Activated B cell treated with CpG ODN at 0.5 μM for 24 hours (primary cell): ENCODE measurements at regions of chr1 and their contacts with region 1.

Region 1: DNA sequence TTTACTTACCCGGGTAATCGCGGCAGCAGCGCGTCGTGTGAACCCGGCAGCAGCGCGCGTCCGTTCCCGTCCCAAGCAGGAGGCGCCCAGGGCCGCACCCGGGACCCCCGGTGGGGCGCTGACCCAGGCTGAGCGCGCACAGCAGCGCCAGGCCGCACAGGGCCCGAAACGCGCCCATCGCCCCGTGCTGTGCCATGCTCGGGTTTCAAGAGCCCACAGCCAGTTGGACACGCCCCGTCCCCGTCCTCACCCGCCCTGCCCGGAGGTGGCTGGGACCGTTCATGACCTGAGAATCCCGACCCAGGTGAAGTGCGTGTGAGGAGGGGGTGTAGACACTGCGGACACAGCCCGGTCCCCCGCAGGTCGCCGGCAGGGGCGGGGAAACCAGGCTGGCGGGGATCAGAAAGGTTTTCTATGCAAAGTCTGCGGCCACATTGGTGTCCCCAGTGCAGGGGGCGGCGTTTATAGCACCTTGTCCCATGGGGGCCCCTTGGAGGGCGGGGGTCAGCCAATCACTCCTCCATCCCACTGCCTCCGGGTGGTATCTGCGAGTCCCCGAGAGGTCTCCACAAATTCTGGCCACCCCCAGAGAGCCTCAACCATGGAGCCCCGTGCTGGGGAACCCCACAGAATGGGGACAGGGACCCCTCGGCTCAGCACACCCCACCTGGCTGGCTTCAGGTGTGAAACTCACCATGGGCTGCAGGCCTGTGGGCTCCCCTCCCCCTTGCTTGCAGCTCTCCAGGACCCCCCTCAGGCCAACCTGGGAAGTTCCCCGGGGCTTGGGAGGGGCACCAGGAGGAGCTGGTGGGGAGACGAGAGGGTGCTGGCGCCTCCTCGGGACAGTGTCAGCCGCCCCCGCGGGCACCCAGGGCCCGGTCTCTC is at the start of gene TNFRSF18:
- DNase-seq: peak; percentile 66
- ATAC-seq: peak; percentile 55
- H3K4me3 Mint-ChIP-seq: peak within 1 kb of the TSS; percentile 81
- H3K27ac Mint-ChIP-seq: peak within 1 kb of the TSS; percentile 46
- H3K4me1 Mint-ChIP-seq: peaks cover 35% of the 10 kb centered on the region
- H3K27me3 Mint-ChIP-seq: peaks cover 2% of the 10 kb centered on the region
- CTCF ChIP-seq: no peak
- total RNA-seq, gene TNFRSF18: 36.7 and 37.5 TPM in 2 replicates

Region 2: DNA sequence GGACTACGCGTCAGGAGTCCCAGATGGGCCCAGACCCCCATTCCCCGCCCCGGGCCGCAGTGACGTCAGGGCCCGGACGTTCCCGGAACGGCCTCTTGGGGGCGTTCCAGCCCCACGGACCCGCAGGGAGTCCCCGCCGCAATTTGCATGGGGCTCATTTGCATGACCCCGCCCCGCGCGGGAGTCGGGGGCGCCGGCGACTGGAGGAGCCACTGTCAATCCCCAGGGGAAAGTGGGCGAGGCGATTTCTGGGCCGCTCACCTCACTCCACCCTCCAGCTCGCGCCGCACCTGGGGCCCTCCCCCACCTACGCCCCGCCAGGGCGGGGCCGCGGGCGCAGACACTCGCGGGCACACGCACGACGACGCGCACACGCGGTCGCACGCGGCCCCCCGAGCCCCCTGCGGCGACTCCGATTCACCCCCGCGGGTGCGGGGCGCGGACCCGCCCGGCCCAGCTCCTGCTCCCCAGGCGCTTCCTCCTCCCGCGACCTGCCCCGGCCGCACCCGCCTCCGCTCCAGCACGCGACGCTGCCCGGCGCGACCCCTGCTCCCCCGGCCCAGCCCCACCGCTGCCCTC is 173.5 kb before region 1 on chr1:
- CTCF ChIA-PET with region 1: no interaction called
- POLR2A ChIA-PET with region 1: no interaction called
- intact Hi-C with region 1: loop called (anchors 1 kb)
- DNase-seq: peak; percentile 97
- ATAC-seq: peak; percentile 96
- H3K4me3 Mint-ChIP-seq: peak overlapping the region; percentile 72
- H3K27ac Mint-ChIP-seq: peak overlapping the region; percentile 24
- H3K4me1 Mint-ChIP-seq: peaks cover 19% of the 10 kb centered on the region
- H3K27me3 Mint-ChIP-seq: no peaks in the 10 kb centered on the region
- CTCF ChIP-seq: peak; percentile 67

Region 3: GRCh38 chr1:1079408-1080121 is 127.1 kb before region 1 on chr1:
- CTCF ChIA-PET with region 1: no interaction called
- POLR2A ChIA-PET with region 1: no interaction called
- intact Hi-C with region 1: no loop called
- DNase-seq: peak; percentile 44
- ATAC-seq: peak; percentile 75
- H3K4me3 Mint-ChIP-seq: peak overlapping the region; percentile 50
- H3K27ac Mint-ChIP-seq: no peak overlapping the region
- H3K4me1 Mint-ChIP-seq: peaks cover 7% of the 10 kb centered on the region
- H3K27me3 Mint-ChIP-seq: peaks cover 2% of the 10 kb centered on the region
- CTCF ChIP-seq: no peak

Region 4: DNA sequence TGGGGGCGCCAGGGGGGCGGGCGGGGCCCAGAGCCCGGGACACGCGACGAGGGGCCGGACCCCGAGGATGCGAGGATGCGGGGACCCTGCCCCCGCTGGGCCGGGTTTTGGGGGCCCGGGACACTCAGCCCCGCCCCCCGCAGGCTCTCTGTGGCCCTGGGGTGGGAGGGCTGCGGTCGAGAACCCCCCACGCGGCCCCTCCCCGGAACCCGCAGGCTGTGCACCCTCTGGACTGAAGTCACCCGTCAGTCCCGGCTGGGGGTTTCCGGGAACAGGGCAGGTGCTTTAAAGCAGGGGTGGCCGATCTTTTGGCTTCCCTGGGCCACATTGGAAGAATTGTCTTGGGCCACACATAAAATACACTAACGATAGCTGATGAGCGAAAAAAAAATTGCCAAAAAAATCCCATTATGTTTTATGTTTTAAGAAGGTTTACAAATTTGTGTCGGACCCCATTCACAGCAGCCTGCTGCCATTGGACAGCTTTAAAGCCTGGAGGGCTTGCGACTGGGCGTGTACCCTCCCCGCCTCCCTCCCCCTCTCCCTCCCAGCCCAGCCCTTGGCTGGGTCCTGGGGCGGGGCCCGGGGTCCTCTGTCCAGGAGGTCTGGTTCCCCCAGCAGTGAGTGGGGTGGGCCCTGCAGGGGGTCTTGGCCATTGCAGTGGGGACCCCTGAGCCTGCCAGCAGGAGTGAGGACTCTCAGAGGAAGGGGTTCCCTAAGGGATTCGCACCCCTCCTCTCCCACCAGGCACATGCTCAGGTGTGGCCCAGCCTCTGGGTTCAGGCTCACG is 69.2 kb before region 1 on chr1:
- CTCF ChIA-PET with region 1: interaction called, 3 read pairs
- POLR2A ChIA-PET with region 1: interaction called, 8 read pairs
- intact Hi-C with region 1: loop called (anchors 1 kb)
- DNase-seq: peak; percentile 78
- ATAC-seq: peak; percentile 75
- H3K4me3 Mint-ChIP-seq: peak overlapping the region; percentile 76
- H3K27ac Mint-ChIP-seq: peak overlapping the region; percentile 90
- H3K4me1 Mint-ChIP-seq: peaks cover 37% of the 10 kb centered on the region
- H3K27me3 Mint-ChIP-seq: no peaks in the 10 kb centered on the region
- CTCF ChIP-seq: no peak

Region 5: GRCh38 chr1:1173793-1174415 is 32.7 kb before region 1 on chr1 and contains the start of gene TTLL10:
- CTCF ChIA-PET with region 1: interaction called, 3 read pairs
- POLR2A ChIA-PET with region 1: interaction called, 14 read pairs
- intact Hi-C with region 1: loop called (anchors 2 kb)
- DNase-seq: peak; percentile 59
- ATAC-seq: peak; percentile 21
- H3K4me3 Mint-ChIP-seq: peak within 1 kb of the TSS; percentile 28
- H3K27ac Mint-ChIP-seq: no peak within 1 kb of the TSS
- H3K4me1 Mint-ChIP-seq: peaks cover 49% of the 10 kb centered on the region
- H3K27me3 Mint-ChIP-seq: peaks cover 10% of the 10 kb centered on the region
- CTCF ChIP-seq: no peak
- total RNA-seq, gene TTLL10: 0.16 TPM in 1 of 2 replicates, not detected in the other

Region 6: DNA sequence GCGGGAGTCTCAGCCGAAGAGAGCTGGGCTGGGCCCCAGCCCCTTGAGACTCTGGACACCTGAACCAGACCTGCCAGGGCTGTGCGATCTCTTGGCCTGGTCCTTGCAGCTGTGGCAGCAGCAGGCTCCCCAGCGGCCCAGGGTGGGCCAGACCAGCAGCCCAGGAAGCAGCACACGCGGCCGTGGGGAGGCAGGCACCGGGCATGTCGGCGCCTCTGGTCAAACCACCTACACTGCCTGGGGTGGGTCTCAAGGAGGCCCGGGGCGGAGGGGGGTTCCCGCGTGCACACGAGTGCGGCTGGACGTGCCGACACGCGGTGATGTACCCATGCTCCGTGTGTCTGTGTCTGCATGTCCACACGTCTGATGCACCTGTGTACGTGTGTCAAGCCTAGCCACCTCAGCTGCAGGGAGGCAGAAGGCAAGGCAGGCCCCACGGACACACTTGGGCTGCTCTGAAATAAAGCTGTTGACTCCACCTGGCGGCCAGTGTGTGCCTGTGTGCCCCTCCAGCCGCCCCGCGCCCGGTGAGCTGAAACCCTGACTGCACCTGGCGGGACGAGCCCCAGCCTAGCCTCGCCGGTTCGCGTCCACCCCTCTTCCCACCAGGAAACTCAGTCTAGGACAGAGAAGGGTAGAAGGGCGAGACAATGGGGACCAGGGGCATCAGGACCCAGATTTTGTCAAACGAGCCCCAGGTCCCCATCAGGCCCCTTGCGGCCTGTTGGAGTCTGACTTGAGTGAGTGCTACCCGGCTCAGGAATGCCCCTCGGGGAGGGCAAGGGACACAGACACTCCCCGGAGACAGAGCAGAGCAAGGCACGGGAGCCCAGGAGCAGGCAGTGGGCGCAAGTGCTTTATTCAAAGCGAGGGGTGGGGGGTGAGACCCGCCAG is 85.2 kb after region 1 on chr1:
- CTCF ChIA-PET with region 1: no interaction called
- POLR2A ChIA-PET with region 1: no interaction called
- intact Hi-C with region 1: loop called (anchors 5 kb)
- DNase-seq: peak; percentile 68
- ATAC-seq: peak; percentile 92
- H3K4me3 Mint-ChIP-seq: no peak overlapping the region
- H3K27ac Mint-ChIP-seq: no peak overlapping the region
- H3K4me1 Mint-ChIP-seq: peaks cover 10% of the 10 kb centered on the region
- H3K27me3 Mint-ChIP-seq: peaks cover 2% of the 10 kb centered on the region
- CTCF ChIP-seq: no peak

Region 7: GRCh38 chr1:1374929-1375662 is 168.5 kb after region 1 on chr1 and contains the start of gene AURKAIP1:
- CTCF ChIA-PET with region 1: no interaction called
- POLR2A ChIA-PET with region 1: no interaction called
- intact Hi-C with region 1: no loop called
- DNase-seq: peak; percentile 88
- ATAC-seq: peak; percentile 91
- H3K4me3 Mint-ChIP-seq: peak within 1 kb of the TSS; percentile 90
- H3K27ac Mint-ChIP-seq: peak within 1 kb of the TSS; percentile 92
- H3K4me1 Mint-ChIP-seq: peaks cover 23% of the 10 kb centered on the region
- H3K27me3 Mint-ChIP-seq: no peaks in the 10 kb centered on the region
- CTCF ChIP-seq: no peak
- total RNA-seq, gene AURKAIP1: 91.5 and 105 TPM in 2 replicates

Region 8: GRCh38 chr1:1479547-1480487 is 273.2 kb after region 1 on chr1:
- CTCF ChIA-PET with region 1: no interaction called
- POLR2A ChIA-PET with region 1: no interaction called
- intact Hi-C with region 1: no loop called
- DNase-seq: no peak
- ATAC-seq: no peak
- H3K4me3 Mint-ChIP-seq: no peak overlapping the region
- H3K27ac Mint-ChIP-seq: no peak overlapping the region
- H3K4me1 Mint-ChIP-seq: peaks cover 4% of the 10 kb centered on the region
- H3K27me3 Mint-ChIP-seq: no peaks in the 10 kb centered on the region
- CTCF ChIP-seq: no peak